Endothelial cell of umbilical vein (primary cell): ENCODE measurements at regions of chr7 and their contacts with region 1.

Region 1: GRCh38 chr7:140924019-140924820 is 509 bp downstream of the BRAF start:
- DNase-seq: peak; percentile 85
- H3K4me3 ChIP-seq: peak overlapping the region; percentile 64 to 89 (median 88)
- H3K27ac ChIP-seq: peak overlapping the region; percentile 93
- H3K4me1 ChIP-seq: peaks cover 12% of the 10 kb centered on the region
- H3K27me3 ChIP-seq: peaks cover 3 to 4% of the 10 kb centered on the region in 2 experiments
- CTCF ChIP-seq: peak; percentile 37 to 56
- POLR2A ChIP-seq: peak; percentile 62

Region 2: GRCh38 chr7:139230774-139231512 is 1693.3 kb before region 1 on chr7 and contains the start of gene UBN2:
- CTCF ChIA-PET with region 1: no interaction called
- POLR2A ChIA-PET with region 1: no interaction called
- dilution Hi-C with region 1: no loop called
- intact Hi-C with region 1: no loop called
- DNase-seq: peak; percentile 99
- H3K4me3 ChIP-seq: peak within 1 kb of the TSS; percentile 35 to 72 (median 67)
- H3K27ac ChIP-seq: peak within 1 kb of the TSS; percentile 67
- H3K4me1 ChIP-seq: peaks cover 16% of the 10 kb centered on the region
- H3K27me3 ChIP-seq: no peaks in the 10 kb centered on the region
- CTCF ChIP-seq: no peak
- POLR2A ChIP-seq: peak; percentile 83
- total RNA-seq, gene UBN2: 11.8 and 14.2 TPM in 2 replicates

Region 3: DNA sequence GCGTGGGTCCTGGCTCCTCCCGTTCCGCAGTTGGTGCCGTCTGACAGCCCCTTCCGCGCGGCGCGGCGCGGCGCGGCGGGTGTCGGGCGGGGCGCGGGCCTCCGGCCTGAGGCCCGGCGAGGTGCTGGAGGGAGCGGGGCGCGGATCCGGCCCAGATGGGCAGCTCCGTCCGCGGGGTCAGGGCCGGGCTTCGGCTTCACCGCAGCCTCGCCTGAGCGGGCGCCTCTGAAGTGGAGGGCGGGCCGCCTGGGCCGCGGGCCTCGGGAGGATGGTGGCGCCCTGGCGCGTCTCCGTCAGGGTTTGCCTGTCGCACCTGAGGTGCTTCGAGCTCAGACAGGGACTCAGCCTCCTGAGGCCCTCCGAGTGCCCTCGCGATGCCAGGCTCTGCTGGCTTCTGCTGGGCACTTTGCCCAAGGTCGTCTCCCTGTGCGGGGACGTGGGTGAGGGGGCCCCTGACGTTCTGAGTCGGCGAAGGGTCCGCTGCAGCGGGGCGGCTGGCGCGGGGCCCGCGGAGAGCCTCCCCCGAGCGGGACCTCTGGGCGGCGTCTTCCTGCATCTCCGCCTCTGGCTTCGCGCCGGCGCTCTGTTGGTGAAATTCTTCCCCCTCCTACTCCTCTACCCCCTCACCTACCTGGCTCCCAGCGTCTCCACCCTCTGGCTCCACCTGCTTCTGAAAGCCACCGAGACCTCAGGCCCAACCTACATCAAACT is 251.0 kb before region 1 on chr7:
- CTCF ChIA-PET with region 1: no interaction called
- POLR2A ChIA-PET with region 1: no interaction called
- dilution Hi-C with region 1: no loop called
- intact Hi-C with region 1: loop called (anchors 5 kb)
- DNase-seq: peak; percentile 28
- H3K4me3 ChIP-seq: peak overlapping the region; percentile 22 to 76 (median 45)
- H3K27ac ChIP-seq: no peak overlapping the region
- H3K4me1 ChIP-seq: peaks cover 8% of the 10 kb centered on the region
- H3K27me3 ChIP-seq: peaks cover 0 to 3% of the 10 kb centered on the region in 2 experiments
- CTCF ChIP-seq: no peak
- POLR2A ChIP-seq: no peak

Region 4: GRCh38 chr7:141362580-141363435 is 438.6 kb after region 1 on chr7:
- CTCF ChIA-PET with region 1: no interaction called
- POLR2A ChIA-PET with region 1: no interaction called
- dilution Hi-C with region 1: no loop called
- intact Hi-C with region 1: loop called (anchors 5 kb)
- DNase-seq: peak; percentile 73
- H3K4me3 ChIP-seq: no peak overlapping the region
- H3K27ac ChIP-seq: peak overlapping the region; percentile 93
- H3K4me1 ChIP-seq: peaks cover 36% of the 10 kb centered on the region
- H3K27me3 ChIP-seq: no peaks in the 10 kb centered on the region
- CTCF ChIP-seq: no peak
- POLR2A ChIP-seq: no peak